ENCODE measurements at regions of chr9 and their contacts with region 1.

Region 1: DNA sequence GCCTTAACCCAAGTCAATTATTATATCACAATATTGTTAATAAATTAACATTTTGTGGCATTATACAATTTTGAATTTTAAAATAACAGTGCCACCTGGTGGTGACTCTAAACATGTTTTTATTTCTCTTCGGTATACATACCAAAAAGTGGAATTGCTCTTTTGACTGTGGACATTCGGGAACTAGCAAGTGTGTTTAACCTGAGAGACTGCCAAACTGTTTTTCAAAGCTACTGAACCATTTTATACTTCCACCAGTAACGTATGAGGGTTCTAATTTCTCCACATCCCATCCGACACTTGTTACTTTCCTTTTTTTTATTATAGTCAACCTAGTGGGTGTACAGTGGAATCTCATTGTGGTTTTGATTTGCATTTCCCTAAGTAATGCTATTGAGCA is 18.3 kb upstream of the HSDL2 start:
- DNase-seq: peak; percentile 70
- ATAC-seq: peak; percentile 45
- H3K4me3 ChIP-seq: no peak overlapping the region
- H3K4me3 Mint-ChIP-seq: peak overlapping the region; percentile 66
- H3K27ac ChIP-seq: no peak overlapping the region
- H3K27ac Mint-ChIP-seq: no peak overlapping the region
- H3K4me1 ChIP-seq: peaks cover 0 to 5% of the 10 kb centered on the region in 2 donors
- H3K4me1 Mint-ChIP-seq: peaks cover 3% of the 10 kb centered on the region
- H3K27me3 ChIP-seq: no peaks in the 10 kb centered on the region
- H3K27me3 Mint-ChIP-seq: no peaks in the 10 kb centered on the region
- CTCF ChIP-seq: peak; percentile 75

Region 2: GRCh38 chr9:111715471-111715870 is 646.1 kb before region 1 on chr9:
- CTCF ChIA-PET with region 1: no interaction called
- POLR2A ChIA-PET with region 1: no interaction called
- intact Hi-C with region 1: no loop called
- DNase-seq: no peak
- ATAC-seq: no peak
- H3K4me3 ChIP-seq: no peak overlapping the region
- H3K4me3 Mint-ChIP-seq: no peak overlapping the region
- H3K27ac ChIP-seq: no peak overlapping the region
- H3K27ac Mint-ChIP-seq: no peak overlapping the region
- H3K4me1 ChIP-seq: no peaks in the 10 kb centered on the region
- H3K4me1 Mint-ChIP-seq: no peaks in the 10 kb centered on the region
- H3K27me3 ChIP-seq: no peaks in the 10 kb centered on the region
- H3K27me3 Mint-ChIP-seq: no peaks in the 10 kb centered on the region
- CTCF ChIP-seq: no peak

Region 3: DNA sequence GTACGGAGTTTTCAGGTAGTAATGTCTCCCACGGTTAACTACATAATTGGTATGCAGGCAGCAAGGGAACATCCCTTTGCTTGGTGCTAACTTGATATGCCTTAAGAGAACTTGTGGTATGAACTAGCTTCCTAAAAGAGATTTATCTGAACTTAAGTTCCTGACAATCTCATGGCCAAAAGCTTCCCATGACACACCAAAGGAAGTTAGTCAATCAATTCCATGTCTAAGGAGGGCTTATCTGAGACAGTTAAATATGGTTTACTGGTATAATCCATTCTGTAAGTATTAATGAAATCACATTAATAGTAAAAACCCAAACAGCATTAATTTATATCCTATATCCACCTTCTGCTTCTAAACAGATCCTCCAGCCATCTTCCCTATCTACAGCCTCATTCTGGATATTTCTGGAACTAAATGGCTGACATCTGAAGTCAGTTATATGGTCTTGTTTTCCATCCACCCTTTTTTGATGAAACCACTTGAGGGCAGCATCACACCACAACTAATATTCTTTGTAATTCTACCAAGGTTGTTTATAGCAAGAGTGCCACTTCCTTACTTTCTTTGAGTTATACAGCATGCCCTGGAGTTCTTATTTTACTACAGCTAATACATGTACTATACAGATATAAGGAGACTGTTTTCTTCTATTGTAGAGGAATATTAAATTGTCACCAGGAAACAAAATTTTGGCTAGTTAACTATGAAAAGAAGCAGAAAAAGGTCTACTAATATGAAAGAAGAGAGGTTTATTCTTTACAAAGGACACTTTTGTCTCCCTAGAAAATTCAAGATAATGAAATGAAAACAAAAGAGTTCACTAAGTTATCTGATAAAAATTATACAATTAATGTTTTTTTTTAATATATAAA is 601.6 kb before region 1 on chr9:
- CTCF ChIA-PET with region 1: interaction called, 72 read pairs
- POLR2A ChIA-PET with region 1: no interaction called
- intact Hi-C with region 1: loop called (anchors 1 kb)
- DNase-seq: peak; percentile 82
- ATAC-seq: peak; percentile 82
- H3K4me3 ChIP-seq: no peak overlapping the region
- H3K4me3 Mint-ChIP-seq: no peak overlapping the region
- H3K27ac ChIP-seq: no peak overlapping the region
- H3K27ac Mint-ChIP-seq: no peak overlapping the region
- H3K4me1 ChIP-seq: peaks cover 0 to 3% of the 10 kb centered on the region in 2 donors
- H3K4me1 Mint-ChIP-seq: peaks cover 4% of the 10 kb centered on the region
- H3K27me3 ChIP-seq: no peaks in the 10 kb centered on the region
- H3K27me3 Mint-ChIP-seq: no peaks in the 10 kb centered on the region
- CTCF ChIP-seq: peak; percentile 91

Region 4: GRCh38 chr9:112086627-112087026 is 275.0 kb before region 1 on chr9:
- CTCF ChIA-PET with region 1: interaction called, 70 read pairs
- POLR2A ChIA-PET with region 1: no interaction called
- intact Hi-C with region 1: loop called (anchors 1 kb)
- DNase-seq: peak; percentile 36
- ATAC-seq: no peak
- H3K4me3 ChIP-seq: no peak overlapping the region
- H3K4me3 Mint-ChIP-seq: no peak overlapping the region
- H3K27ac ChIP-seq: no peak overlapping the region
- H3K27ac Mint-ChIP-seq: no peak overlapping the region
- H3K4me1 ChIP-seq: no peaks in the 10 kb centered on the region
- H3K4me1 Mint-ChIP-seq: no peaks in the 10 kb centered on the region
- H3K27me3 ChIP-seq: no peaks in the 10 kb centered on the region
- H3K27me3 Mint-ChIP-seq: no peaks in the 10 kb centered on the region
- CTCF ChIP-seq: peak; percentile 68

Region 5: GRCh38 chr9:112097712-112098688 is 263.6 kb before region 1 on chr9:
- CTCF ChIA-PET with region 1: interaction called, 143 read pairs
- POLR2A ChIA-PET with region 1: no interaction called
- intact Hi-C with region 1: no loop called
- DNase-seq: peak; percentile 86
- ATAC-seq: peak; percentile 94
- H3K4me3 ChIP-seq: no peak overlapping the region
- H3K4me3 Mint-ChIP-seq: no peak overlapping the region
- H3K27ac ChIP-seq: no peak overlapping the region
- H3K27ac Mint-ChIP-seq: peak overlapping the region; percentile 16
- H3K4me1 ChIP-seq: peaks cover 10 to 13% of the 10 kb centered on the region in 2 donors
- H3K4me1 Mint-ChIP-seq: peaks cover 37% of the 10 kb centered on the region
- H3K27me3 ChIP-seq: no peaks in the 10 kb centered on the region
- H3K27me3 Mint-ChIP-seq: no peaks in the 10 kb centered on the region
- CTCF ChIP-seq: peak; percentile 94

Region 6: DNA sequence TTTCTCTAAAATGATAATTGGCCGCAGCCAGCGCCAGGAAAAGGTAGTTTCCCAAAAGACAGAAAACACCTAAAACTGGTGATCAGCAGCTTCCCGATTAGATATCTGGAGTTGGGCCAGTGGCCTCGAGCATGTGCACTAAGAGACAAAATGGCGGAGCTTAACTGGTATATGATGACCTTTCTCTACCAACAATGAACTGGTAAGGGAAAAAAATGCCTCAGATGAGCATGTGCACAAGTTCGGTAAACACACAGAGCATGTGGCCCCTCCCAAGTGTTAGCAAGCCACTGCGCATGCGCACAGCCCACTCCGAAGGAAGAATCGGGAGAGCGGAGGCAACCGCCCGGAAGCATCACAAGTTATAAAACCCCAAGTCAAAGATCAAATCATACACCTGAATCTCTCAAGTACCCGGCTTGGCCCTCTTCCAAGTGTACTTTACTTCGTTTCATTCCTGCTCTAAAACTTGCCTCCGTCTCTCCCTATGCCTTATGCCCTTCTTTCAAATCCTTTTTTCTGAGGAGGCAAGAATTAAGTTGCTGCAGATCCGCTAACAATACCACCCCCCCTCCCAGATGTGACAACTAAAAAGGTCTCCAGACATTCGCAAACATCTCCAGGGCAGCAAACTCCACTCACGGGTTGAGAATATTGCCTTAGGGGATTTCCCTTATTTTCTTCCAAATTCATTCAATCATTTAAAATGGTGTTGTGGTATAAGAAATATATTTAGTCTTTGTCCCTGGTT is 13.2 kb before region 1 on chr9:
- CTCF ChIA-PET with region 1: interaction called, 12 read pairs
- POLR2A ChIA-PET with region 1: no interaction called
- intact Hi-C with region 1: no loop called
- DNase-seq: peak; percentile 74
- ATAC-seq: peak; percentile 63
- H3K4me3 ChIP-seq: peak overlapping the region; percentile 40 to 62 (median 45)
- H3K4me3 Mint-ChIP-seq: peak overlapping the region; percentile 86
- H3K27ac ChIP-seq: no peak overlapping the region
- H3K27ac Mint-ChIP-seq: peak overlapping the region; percentile 75
- H3K4me1 ChIP-seq: peaks cover 5 to 9% of the 10 kb centered on the region in 2 donors
- H3K4me1 Mint-ChIP-seq: peaks cover 12% of the 10 kb centered on the region
- H3K27me3 ChIP-seq: peaks cover 0 to 3% (median 0%) of the 10 kb centered on the region in 4 experiments
- H3K27me3 Mint-ChIP-seq: no peaks in the 10 kb centered on the region
- CTCF ChIP-seq: no peak

Measured in B cell (primary cell).